Breast epithelium (tissue), 4 donors: ENCODE measurements at regions of chr12 and their contacts with region 1.

Region 1: GRCh38 chr12:83573671-83574070 is 887.0 kb downstream of the TMTC2 start:
- DNase-seq: no peak
- H3K4me3 ChIP-seq: no peak overlapping the region
- H3K27ac ChIP-seq: no peak overlapping the region
- H3K4me1 ChIP-seq: no peaks in the 10 kb centered on the region
- H3K27me3 ChIP-seq: no peaks in the 10 kb centered on the region
- CTCF ChIP-seq: no peak
- POLR2A ChIP-seq: no peak

Region 2: GRCh38 chr12:82896979-82897378 is 676.7 kb before region 1 on chr12:
- intact Hi-C with region 1: no loop called
- DNase-seq: peak in 1 of 2 donors; percentile 49
- H3K4me3 ChIP-seq: no peak overlapping the region
- H3K27ac ChIP-seq: no peak overlapping the region
- H3K4me1 ChIP-seq: no peaks in the 10 kb centered on the region
- H3K27me3 ChIP-seq: no peaks in the 10 kb centered on the region
- CTCF ChIP-seq: no peak
- POLR2A ChIP-seq: no peak

Region 3: GRCh38 chr12:83346333-83346732 is 227.3 kb before region 1 on chr12:
- intact Hi-C with region 1: no loop called
- DNase-seq: no peak
- H3K4me3 ChIP-seq: no peak overlapping the region
- H3K27ac ChIP-seq: no peak overlapping the region
- H3K4me1 ChIP-seq: no peaks in the 10 kb centered on the region
- H3K27me3 ChIP-seq: no peaks in the 10 kb centered on the region
- CTCF ChIP-seq: no peak
- POLR2A ChIP-seq: no peak

Region 4: DNA sequence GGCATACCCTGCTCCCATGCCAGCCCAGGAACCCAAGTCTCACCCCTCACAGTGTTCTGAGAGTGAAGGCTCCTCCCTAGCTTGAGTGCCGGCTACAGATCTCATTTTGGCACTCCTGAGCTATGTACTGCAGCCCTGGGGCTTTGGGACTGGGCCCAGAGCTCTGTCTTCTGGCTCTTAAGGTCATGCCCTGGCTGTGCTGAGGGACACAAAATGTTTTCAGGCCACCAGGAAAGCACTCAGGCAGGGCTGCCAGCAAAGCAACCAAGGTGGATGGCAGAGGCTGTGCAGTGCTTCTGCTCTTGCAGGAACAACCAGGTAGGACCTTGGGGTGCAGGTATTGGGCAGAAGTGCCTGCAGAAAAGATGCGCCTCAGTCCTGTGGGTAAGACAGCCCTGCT is 774.9 kb after region 1 on chr12:
- intact Hi-C with region 1: loop called (anchors 5 kb)
- DNase-seq: no peak
- H3K4me3 ChIP-seq: no peak overlapping the region
- H3K27ac ChIP-seq: no peak overlapping the region
- H3K4me1 ChIP-seq: no peaks in the 10 kb centered on the region
- H3K27me3 ChIP-seq: no peaks in the 10 kb centered on the region
- CTCF ChIP-seq: no peak
- POLR2A ChIP-seq: no peak